Heart right ventricle (tissue), 16 donors: ENCODE measurements at regions of chr1 and their contacts with region 1.

Region 1: GRCh38 chr1:97814121-97814520 is 106.7 kb downstream of the DPYD start:
- DNase-seq: no peak
- ATAC-seq: no peak
- H3K4me3 ChIP-seq: no peak overlapping the region
- H3K27ac ChIP-seq: no peak overlapping the region
- H3K4me1 ChIP-seq: no peaks in the 10 kb centered on the region
- H3K27me3 ChIP-seq: no peaks in the 10 kb centered on the region
- CTCF ChIP-seq: no peak

Region 2: GRCh38 chr1:97137862-97138514 is 676.1 kb before region 1 on chr1:
- intact Hi-C with region 1: loop called in 1 of 10 experiments (anchors 5 kb)
- DNase-seq: peak in 1 of 2 donors; percentile 63
- ATAC-seq: peak; percentile 83 to 98 (median 92)
- H3K4me3 ChIP-seq: peak overlapping the region in 6 of 10 donors; percentile 1 to 45 (median 29)
- H3K27ac ChIP-seq: peak overlapping the region in 3 of 10 donors; percentile 27 to 54 (median 33)
- H3K4me1 ChIP-seq: peaks cover 0 to 15% (median 8%) of the 10 kb centered on the region in 9 donors
- H3K27me3 ChIP-seq: no peaks in the 10 kb centered on the region
- CTCF ChIP-seq: peak; percentile 41 to 77 (median 68)

Region 3: GRCh38 chr1:97243973-97244560 is 570.1 kb before region 1 on chr1:
- intact Hi-C with region 1: loop called in 1 of 10 experiments (anchors 10 kb)
- DNase-seq: no peak
- ATAC-seq: no peak
- H3K4me3 ChIP-seq: no peak overlapping the region
- H3K27ac ChIP-seq: no peak overlapping the region
- H3K4me1 ChIP-seq: peaks cover 0 to 22% (median 3%) of the 10 kb centered on the region in 9 donors
- H3K27me3 ChIP-seq: no peaks in the 10 kb centered on the region
- CTCF ChIP-seq: peak; percentile 23 to 61 (median 48)

Region 4: DNA sequence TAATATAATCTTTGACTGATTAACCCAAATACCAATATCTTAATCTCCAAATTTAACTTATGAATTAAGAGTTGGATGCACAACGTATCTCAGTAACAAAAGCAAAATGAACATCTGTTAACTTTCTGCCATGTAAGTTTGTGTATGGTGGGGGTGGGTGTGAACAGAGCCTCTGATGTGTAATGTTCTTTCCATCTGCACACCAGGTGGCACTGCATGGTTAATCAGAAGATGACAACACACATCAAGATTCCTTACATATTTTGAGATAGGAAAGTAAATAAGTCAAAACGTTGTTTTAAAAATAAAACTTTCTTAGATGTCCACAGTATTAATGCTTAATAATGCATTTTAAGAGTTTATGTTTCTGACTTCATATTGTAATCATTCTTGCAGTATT is 145.2 kb before region 1 on chr1:
- intact Hi-C with region 1: loop called in 1 of 10 experiments (anchors 10 kb)
- DNase-seq: no peak
- ATAC-seq: no peak
- H3K4me3 ChIP-seq: no peak overlapping the region
- H3K27ac ChIP-seq: no peak overlapping the region
- H3K4me1 ChIP-seq: no peaks in the 10 kb centered on the region
- H3K27me3 ChIP-seq: no peaks in the 10 kb centered on the region
- CTCF ChIP-seq: peak in 6 of 9 donors; percentile 20 to 41 (median 30)